ENCODE measurements at regions of chr1 and their contacts with region 1.

Region 1: GRCh38 chr1:25619101-25619890 is 2.7 kb downstream of the MAN1C1 start:
- DNase-seq: peak; percentile 61
- ATAC-seq: peak; percentile 19
- H3K4me3 Mint-ChIP-seq: peak overlapping the region; percentile 78
- H3K27ac Mint-ChIP-seq: peak overlapping the region; percentile 50
- H3K4me1 Mint-ChIP-seq: peaks cover 79% of the 10 kb centered on the region
- H3K27me3 Mint-ChIP-seq: peaks cover 3% of the 10 kb centered on the region
- CTCF ChIP-seq: peak; percentile 94

Region 2: DNA sequence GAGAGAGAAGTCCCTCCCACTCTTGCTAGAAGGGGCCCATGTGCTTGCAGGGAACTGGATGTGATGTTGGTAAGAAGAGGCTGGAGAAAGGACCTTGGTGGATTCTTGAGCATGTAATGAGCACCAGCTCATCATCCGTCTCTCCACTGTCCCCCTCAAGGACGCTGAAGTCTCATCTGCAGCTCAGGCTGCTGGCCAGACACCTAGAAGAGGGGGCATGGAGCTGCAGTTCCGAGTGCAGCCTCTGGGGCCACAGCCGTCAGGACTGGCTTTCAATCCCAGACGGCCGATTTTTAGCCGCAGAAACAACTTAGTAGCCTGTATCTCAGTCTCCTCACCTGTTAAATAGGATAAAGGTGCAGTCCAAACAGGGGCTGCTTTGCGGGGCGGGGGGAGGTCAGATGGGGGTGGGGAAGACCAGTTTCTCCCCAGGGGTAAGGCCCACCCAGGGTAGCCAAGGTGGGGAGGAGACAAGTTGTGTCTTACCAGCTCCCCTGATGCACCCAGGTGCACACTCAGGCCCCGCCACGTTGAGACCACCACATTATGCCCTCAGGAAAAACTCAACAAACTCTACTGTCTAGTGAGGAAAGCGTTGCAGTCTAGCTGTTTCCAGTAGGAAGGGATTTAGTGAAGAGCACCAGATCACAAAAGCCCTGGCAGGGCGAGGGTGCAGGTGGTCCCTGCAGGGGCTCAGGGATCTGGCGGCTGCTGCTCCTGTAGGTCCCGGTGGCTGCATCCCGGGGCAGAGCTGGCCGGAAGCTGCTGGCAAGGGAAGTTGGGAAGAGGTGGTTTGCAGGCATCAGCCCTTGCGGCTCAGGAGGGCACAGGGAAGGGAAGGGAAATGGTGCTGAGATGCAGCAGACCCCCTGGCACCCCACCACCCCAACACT is 46.3 kb before region 1 on chr1:
- CTCF ChIA-PET with region 1: interaction called, 13 read pairs
- POLR2A ChIA-PET with region 1: no interaction called
- intact Hi-C with region 1: no loop called
- DNase-seq: peak; percentile 78
- ATAC-seq: peak; percentile 79
- H3K4me3 Mint-ChIP-seq: no peak overlapping the region
- H3K27ac Mint-ChIP-seq: no peak overlapping the region
- H3K4me1 Mint-ChIP-seq: peaks cover 48% of the 10 kb centered on the region
- H3K27me3 Mint-ChIP-seq: no peaks in the 10 kb centered on the region
- CTCF ChIP-seq: peak; percentile 82

Region 3: GRCh38 chr1:25631750-25632485 is 12.6 kb after region 1 on chr1:
- CTCF ChIA-PET with region 1: interaction called, 22 read pairs
- POLR2A ChIA-PET with region 1: interaction called, 5 read pairs
- intact Hi-C with region 1: no loop called
- DNase-seq: peak; percentile 27
- ATAC-seq: peak; percentile 71
- H3K4me3 Mint-ChIP-seq: peak overlapping the region; percentile 77
- H3K27ac Mint-ChIP-seq: peak overlapping the region; percentile 87
- H3K4me1 Mint-ChIP-seq: peaks cover 64% of the 10 kb centered on the region
- H3K27me3 Mint-ChIP-seq: no peaks in the 10 kb centered on the region
- CTCF ChIP-seq: no peak

Region 4: GRCh38 chr1:25666505-25666904 is 47.2 kb after region 1 on chr1:
- CTCF ChIA-PET with region 1: interaction called, 10 read pairs
- POLR2A ChIA-PET with region 1: no interaction called
- intact Hi-C with region 1: no loop called
- DNase-seq: no peak
- ATAC-seq: no peak
- H3K4me3 Mint-ChIP-seq: no peak overlapping the region
- H3K27ac Mint-ChIP-seq: no peak overlapping the region
- H3K4me1 Mint-ChIP-seq: peaks cover 52% of the 10 kb centered on the region
- H3K27me3 Mint-ChIP-seq: peaks cover 3% of the 10 kb centered on the region
- CTCF ChIP-seq: no peak

Region 5: GRCh38 chr1:25692560-25692959 is 73.3 kb after region 1 on chr1:
- CTCF ChIA-PET with region 1: interaction called, 12 read pairs
- POLR2A ChIA-PET with region 1: interaction called, 3 read pairs
- intact Hi-C with region 1: no loop called
- DNase-seq: peak; percentile 29
- ATAC-seq: peak; percentile 57
- H3K4me3 Mint-ChIP-seq: no peak overlapping the region
- H3K27ac Mint-ChIP-seq: no peak overlapping the region
- H3K4me1 Mint-ChIP-seq: peaks cover 45% of the 10 kb centered on the region
- H3K27me3 Mint-ChIP-seq: no peaks in the 10 kb centered on the region
- CTCF ChIP-seq: peak; percentile 61

Region 6: DNA sequence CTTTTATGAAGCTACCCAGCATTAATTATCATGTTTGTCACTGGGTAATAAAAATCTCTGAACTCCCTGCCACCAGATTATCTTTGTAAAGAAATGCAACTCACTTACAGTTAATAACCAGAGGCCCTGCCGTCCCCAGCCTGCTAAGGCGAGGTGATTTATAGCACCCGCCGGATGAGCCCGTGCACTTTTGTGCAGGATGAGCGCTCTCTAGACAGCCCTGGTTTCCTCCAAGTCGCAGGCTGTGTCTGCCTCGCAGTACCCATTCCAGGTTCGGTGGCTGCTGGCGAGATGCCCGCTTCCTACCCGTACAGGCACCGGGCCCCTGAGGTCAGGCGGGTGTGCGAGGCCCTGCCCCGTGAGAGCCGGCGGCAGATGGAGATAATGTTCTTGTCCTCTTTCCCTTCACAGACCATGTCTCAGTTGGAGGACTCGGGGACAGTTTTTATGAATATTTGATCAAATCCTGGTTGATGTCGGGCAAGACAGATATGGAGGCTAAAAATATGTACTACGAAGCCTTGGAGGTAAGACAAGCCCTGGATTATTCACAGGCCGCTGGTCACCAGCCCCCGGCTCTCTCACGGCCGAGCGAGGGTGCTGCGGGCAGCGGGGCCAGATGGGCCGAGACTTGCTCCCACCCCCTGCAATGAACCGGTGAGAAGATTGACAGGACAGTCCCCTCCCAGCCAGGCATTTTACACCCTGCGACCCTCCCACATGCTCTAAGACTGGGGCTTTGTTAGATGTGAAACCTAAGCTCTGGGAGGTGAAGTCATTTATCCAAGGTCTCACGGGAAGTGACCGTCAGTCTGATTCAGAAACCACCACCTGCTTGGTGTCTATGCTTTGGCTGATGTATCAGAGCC is 152.2 kb after region 1 on chr1:
- CTCF ChIA-PET with region 1: interaction called, 13 read pairs
- POLR2A ChIA-PET with region 1: interaction called, 4 read pairs
- intact Hi-C with region 1: no loop called
- DNase-seq: peak; percentile 55
- ATAC-seq: peak; percentile 22
- H3K4me3 Mint-ChIP-seq: no peak overlapping the region
- H3K27ac Mint-ChIP-seq: peak overlapping the region; percentile 15
- H3K4me1 Mint-ChIP-seq: peaks cover 80% of the 10 kb centered on the region
- H3K27me3 Mint-ChIP-seq: no peaks in the 10 kb centered on the region
- CTCF ChIP-seq: no peak

Measured in activated CD8-positive, alpha-beta T cell treated with anti-CD3 and anti-CD28 coated beads for 36 hours (primary cell).